CD14-positive monocyte (primary cell): ENCODE measurements at regions of chr1 and their contacts with region 1.

Region 1: DNA sequence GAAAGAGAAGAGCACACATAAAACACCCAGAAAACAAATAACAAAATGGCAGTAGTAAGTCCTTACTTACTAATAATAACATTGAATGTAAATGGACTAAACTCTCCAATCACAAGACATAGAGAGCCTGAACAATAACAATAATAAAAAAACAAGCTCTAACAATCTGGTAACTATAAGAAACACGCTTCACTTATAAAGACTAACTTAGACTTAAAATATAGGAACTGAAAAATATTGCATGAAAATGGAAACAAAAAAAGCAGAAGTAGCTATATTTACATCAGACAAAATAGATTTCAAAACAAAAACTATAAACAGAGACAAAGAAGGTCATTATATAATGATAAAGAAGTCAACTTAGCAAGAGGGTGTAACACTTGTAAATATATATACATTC is 83.1 kb upstream of the LYPLAL1 start:
- DNase-seq: peak; percentile 56 to 85 (median 68)
- H3K4me3 ChIP-seq: peak overlapping the region in 1 of 3 experiments; percentile 49
- H3K4me3 Mint-ChIP-seq: peak overlapping the region in 1 of 2 donors; percentile 51
- H3K27ac ChIP-seq: peak overlapping the region; percentile 59 to 94
- H3K27ac Mint-ChIP-seq: peak overlapping the region; percentile 97 to 99 (median 98)
- H3K4me1 ChIP-seq: peaks cover 42 to 61% of the 10 kb centered on the region in 2 donors
- H3K4me1 Mint-ChIP-seq: peaks cover 59% of the 10 kb centered on the region
- H3K27me3 ChIP-seq: no peaks in the 10 kb centered on the region
- H3K27me3 Mint-ChIP-seq: peaks cover 0 to 8% (median 0%) of the 10 kb centered on the region in 3 donors
- CTCF ChIP-seq: no peak

Region 2: GRCh38 chr1:219143735-219144134 is 53.1 kb after region 1 on chr1:
- intact Hi-C with region 1: loop called in 1 of 2 experiments (anchors 10 kb)
- DNase-seq: peak in 2 of 3 donors; percentile 26 to 42
- H3K4me3 ChIP-seq: no peak overlapping the region
- H3K4me3 Mint-ChIP-seq: no peak overlapping the region
- H3K27ac ChIP-seq: peak overlapping the region in 1 of 2 donors; percentile 24
- H3K27ac Mint-ChIP-seq: peak overlapping the region in 4 of 7 donors; percentile 43 to 87 (median 62)
- H3K4me1 ChIP-seq: peaks cover 15 to 27% of the 10 kb centered on the region in 2 donors
- H3K4me1 Mint-ChIP-seq: peaks cover 22% of the 10 kb centered on the region
- H3K27me3 ChIP-seq: no peaks in the 10 kb centered on the region
- H3K27me3 Mint-ChIP-seq: peaks cover 0 to 2% (median 2%) of the 10 kb centered on the region in 3 donors
- CTCF ChIP-seq: no peak

Region 3: GRCh38 chr1:219173758-219174588 is 83.4 kb after region 1 on chr1 and contains the start of gene LYPLAL1:
- intact Hi-C with region 1: loop called in 1 of 2 experiments (anchors 2 kb)
- DNase-seq: peak; percentile 88
- H3K4me3 ChIP-seq: peak within 1 kb of the TSS; percentile 56 to 83 (median 70)
- H3K4me3 Mint-ChIP-seq: peak within 1 kb of the TSS; percentile 95 to 99
- H3K27ac ChIP-seq: peak within 1 kb of the TSS; percentile 82 to 95
- H3K27ac Mint-ChIP-seq: peak within 1 kb of the TSS; percentile 94 to 100 (median 97)
- H3K4me1 ChIP-seq: peaks cover 19 to 30% of the 10 kb centered on the region in 2 donors
- H3K4me1 Mint-ChIP-seq: peaks cover 44% of the 10 kb centered on the region
- H3K27me3 ChIP-seq: no peaks in the 10 kb centered on the region
- H3K27me3 Mint-ChIP-seq: peaks cover 0 to 1% (median 0%) of the 10 kb centered on the region in 3 donors
- CTCF ChIP-seq: peak; percentile 18
- polyA plus RNA-seq, gene LYPLAL1: 10.2 to 55.9 (median 36.1) TPM